ENCODE measurements at regions of chr17 and their contacts with region 1.

Region 1: GRCh38 chr17:40490289-40490853 is 11.1 kb downstream of the TNS4 start:
- DNase-seq: peak; percentile 59
- H3K4me3 ChIP-seq: no peak overlapping the region
- H3K27ac ChIP-seq: peak overlapping the region; percentile 57
- H3K27me3 ChIP-seq: no peaks in the 10 kb centered on the region
- CTCF ChIP-seq: no peak

Region 2: DNA sequence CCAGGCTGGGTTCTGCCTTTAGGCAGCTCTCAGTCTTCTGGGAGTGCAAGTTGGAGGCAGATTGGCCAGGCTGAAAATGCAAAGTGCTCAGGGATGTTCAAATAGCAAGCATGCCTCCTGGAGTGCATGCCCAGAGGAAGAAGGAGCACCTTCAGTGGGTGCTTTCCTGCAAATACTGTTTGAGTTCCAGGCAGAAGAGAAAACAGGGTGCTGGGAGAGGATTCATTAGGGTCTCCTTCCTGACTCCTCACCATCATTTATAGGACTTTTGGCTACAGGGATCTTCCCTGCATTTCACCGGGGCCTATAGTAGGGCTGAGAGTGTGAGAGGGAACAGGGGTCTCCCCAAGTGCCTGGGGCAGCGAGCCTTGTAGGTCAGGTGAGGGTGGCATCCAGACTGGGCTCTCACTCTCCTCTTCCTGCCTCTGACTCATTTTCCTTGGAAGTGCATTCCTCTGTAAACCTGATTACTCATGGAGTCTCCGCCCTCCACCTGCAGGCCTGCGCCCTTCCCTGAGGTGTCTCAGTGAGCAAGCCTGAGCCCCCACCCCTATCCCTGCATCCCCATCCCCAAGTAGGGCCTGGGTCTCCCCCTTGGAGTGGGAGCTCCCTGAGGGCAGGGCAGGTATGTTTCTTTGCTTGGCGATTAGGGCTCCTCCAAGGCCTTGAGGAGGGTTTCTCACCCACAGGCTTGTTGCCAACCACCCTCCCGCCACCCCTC is 28.2 kb after region 1 on chr17:
- CTCF ChIA-PET with region 1: interaction called, 3 read pairs
- POLR2A ChIA-PET with region 1: interaction called, 11 read pairs
- DNase-seq: no peak
- H3K4me3 ChIP-seq: no peak overlapping the region
- H3K27ac ChIP-seq: no peak overlapping the region
- H3K27me3 ChIP-seq: no peaks in the 10 kb centered on the region
- CTCF ChIP-seq: no peak

Measured in AG04450 (cell line).